ENCODE measurements at regions of chr3 and their contacts with region 1.

Region 1: DNA sequence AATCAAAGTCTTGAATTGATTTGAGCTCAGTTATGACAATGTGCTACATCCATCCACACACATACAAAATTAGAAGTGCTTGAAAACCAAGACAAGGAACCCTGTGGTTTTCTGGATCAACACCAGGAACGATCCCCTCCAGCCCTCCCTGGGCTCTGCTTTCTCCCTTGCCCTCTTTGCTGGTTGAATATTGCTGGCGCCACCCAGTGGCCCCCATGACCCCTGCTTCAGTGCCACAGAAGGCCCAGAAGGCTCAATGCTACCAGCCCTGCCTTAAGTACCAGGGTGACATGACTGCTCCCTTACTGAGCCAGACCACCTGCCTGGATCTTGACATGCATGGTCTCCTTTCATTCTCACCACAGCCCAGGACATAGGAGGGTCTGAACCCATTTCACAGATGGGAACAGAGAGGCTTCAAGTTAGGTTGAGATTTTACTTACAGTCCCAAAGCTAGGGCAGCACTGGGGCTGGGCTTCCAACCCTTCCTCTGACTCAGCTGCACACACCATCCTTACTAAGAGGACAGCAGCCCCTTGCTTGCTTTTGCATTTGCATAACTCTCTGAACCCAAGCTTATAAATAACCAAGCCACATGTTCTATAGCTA is 15.0 kb downstream of the IL12A start:
- DNase-seq: no peak
- H3K4me3 ChIP-seq: no peak overlapping the region
- CTCF ChIP-seq: peak; percentile 65

Region 2: DNA sequence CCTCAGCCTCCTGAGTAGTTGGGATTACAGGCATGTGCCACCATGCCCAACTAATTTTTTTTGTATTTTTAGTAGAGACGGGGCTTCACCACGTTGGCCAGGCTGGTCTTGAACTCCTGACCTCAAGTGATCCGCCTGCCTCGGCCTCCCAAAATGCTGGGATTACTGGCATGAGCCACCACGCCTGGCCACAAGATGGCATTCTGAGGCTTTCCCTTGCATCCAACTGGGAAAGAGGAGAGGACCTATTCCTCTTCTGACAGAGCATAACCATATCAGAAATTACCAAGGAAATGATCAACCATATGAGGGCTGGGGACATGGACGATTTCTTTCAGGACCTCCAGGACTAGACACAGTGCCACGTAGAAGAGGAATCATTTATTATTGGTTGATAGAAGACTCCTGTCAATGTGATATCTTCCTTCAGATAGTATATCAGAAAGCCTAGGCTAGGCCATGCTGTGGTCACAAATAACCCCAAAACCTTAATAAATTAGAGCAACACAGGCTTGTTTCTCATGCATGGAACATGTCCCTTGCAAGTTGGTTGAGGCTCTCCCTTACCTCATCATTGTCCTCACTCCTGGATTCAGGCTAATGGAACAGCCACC is 387.3 kb before region 1 on chr3:
- CTCF ChIA-PET with region 1: interaction called, 13 read pairs
- POLR2A ChIA-PET with region 1: no interaction called
- DNase-seq: no peak
- H3K4me3 ChIP-seq: no peak overlapping the region
- CTCF ChIP-seq: peak; percentile 65

Region 3: DNA sequence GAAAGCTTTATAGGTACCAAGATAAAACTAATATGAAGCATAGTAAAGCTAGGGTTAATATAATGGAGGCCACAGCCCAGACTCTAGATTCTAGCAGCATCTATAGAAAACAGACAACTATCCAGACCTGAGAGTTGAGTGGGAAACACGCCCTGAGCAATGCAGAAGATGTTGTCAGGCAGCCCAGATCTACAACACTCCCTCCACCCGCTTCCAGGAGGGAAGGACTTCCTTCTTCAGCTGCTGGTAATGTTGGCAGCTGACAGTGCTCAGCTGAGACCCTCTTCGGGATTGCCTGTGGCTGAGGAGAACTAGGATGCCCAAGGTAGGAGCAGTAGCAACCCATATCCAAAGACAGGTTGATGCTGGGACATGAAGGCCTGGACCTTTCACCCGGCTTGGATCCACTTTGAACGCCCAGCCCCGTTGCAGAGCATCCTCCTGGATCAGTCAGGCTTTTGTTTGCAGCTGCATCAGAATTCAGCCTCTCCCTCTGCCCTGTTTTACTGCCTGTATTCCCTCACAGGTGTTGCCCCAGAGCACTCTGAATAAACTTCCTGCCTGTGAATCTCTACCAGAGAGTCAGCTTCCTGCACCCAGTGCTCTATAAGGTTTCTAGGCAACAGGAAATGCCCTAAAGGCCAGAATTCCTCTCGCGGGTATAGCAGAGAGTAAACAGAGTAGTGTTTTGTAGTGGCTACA is 189.7 kb before region 1 on chr3:
- CTCF ChIA-PET with region 1: interaction called, 16 read pairs
- POLR2A ChIA-PET with region 1: no interaction called
- DNase-seq: no peak
- H3K4me3 ChIP-seq: no peak overlapping the region
- CTCF ChIP-seq: no peak

Region 4: DNA sequence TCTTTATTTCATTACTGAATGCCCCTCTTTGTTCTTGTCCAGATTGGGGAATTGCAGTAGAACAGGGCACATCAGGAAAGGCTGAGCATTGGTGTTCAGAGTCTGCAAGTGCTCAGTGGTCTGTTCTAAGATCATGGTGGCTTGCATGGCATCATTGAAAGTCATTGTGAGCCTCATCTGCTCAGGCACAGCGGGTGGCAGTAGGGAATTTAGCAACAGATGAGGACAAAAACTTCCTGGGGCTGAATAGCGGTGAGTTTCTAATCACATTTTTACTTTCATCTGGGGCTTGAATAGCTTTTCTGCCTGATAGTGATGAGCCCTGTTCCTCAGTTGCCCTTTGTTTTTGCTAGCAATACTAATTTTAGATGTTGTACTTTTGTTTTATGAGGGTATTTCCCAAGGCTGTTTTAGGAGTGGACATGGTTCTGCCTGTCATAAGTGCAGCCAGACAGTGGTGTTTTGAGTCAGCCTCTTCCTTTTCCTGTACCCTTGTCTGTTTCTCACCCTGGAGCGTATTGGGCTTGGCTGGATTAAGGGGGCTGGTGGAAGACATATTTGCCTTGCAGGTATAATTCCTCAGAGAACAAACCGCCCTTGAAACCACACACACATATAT is 142.1 kb before region 1 on chr3:
- CTCF ChIA-PET with region 1: interaction called, 14 read pairs
- POLR2A ChIA-PET with region 1: no interaction called
- DNase-seq: no peak
- H3K4me3 ChIP-seq: no peak overlapping the region
- CTCF ChIP-seq: no peak

Region 5: GRCh38 chr3:159902546-159903314 is 100.9 kb before region 1 on chr3:
- CTCF ChIA-PET with region 1: interaction called, 84 read pairs
- POLR2A ChIA-PET with region 1: no interaction called
- DNase-seq: no peak
- H3K4me3 ChIP-seq: no peak overlapping the region
- CTCF ChIP-seq: no peak

Region 6: GRCh38 chr3:159929435-159930141 is 74.0 kb before region 1 on chr3:
- CTCF ChIA-PET with region 1: interaction called, 138 read pairs
- POLR2A ChIA-PET with region 1: no interaction called
- DNase-seq: peak; percentile 59
- H3K4me3 ChIP-seq: no peak overlapping the region
- CTCF ChIP-seq: peak; percentile 59

Region 7: DNA sequence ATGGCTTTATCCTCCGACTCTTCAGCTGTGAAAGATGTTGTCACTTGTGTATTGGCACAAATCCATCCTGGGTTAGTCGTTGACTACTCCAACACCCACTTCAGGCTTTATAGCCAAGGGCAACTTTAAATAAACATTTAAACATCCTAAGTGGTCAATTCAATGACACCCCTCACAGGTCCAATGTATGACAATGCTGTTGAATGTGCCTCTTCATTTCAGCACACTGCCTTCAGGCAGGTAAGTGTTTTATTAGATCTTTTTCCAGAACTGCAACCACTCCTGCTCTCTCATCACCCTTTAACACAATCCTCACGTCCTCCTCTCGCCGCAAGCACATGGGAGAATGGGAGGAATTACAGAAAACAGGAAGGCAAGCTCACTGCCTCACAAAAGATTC is 15.3 kb after region 1 on chr3:
- CTCF ChIA-PET with region 1: interaction called, 41 read pairs
- POLR2A ChIA-PET with region 1: no interaction called
- DNase-seq: no peak
- H3K4me3 ChIP-seq: no peak overlapping the region
- CTCF ChIP-seq: no peak